OCI-LY7 (cell line): ENCODE measurements at regions of chr4 and their contacts with region 1.

Region 1: DNA sequence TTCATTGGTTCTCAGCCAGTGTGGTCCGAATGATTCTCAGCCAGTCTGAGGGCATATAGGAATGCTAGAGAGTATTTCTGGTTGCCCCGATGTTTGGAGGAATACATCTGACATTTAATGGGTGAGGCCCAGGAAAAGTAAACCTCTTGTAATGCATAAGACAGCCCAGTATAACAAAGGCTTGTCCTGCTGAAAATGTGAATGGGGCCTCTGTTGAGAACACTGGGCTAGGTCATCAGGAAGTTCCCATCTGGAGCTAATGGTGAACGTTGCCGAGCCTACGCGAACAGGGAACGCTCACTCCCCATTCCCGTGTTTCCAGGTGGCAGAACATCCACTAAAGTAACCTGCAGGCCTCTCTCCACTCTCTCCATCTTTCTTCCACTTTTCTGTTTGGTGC is 132.0 kb upstream of the CLNK start:
- DNase-seq: no peak
- H3K4me3 ChIP-seq: no peak overlapping the region
- H3K27ac ChIP-seq: no peak overlapping the region
- H3K4me1 ChIP-seq: no peaks in the 10 kb centered on the region
- CTCF ChIP-seq: no peak

Region 2: DNA sequence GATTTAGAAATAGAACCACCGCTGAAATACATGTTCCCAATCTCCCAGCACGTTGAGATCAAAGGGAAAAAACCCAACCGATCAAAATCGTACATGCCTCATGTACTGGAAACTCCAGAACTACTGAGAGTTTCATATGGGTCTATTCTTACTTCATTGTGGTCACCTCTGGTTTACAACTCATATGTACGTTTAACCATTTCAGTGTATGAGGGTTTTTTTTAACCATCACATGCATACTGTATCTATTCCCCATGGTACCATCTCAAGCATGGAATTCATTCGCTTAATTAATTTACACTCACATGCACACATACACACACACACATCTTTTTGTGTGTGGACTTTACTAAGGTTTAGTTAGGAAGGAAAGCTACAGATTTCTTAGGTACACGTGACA is 86.0 kb before region 1 on chr4:
- CTCF ChIA-PET with region 1: no interaction called
- POLR2A ChIA-PET with region 1: no interaction called
- intact Hi-C with region 1: no loop called
- DNase-seq: no peak
- H3K4me3 ChIP-seq: no peak overlapping the region
- H3K27ac ChIP-seq: no peak overlapping the region
- H3K4me1 ChIP-seq: peaks cover 31% of the 10 kb centered on the region
- CTCF ChIP-seq: no peak

Region 3: GRCh38 chr4:10783351-10783750 is 33.2 kb before region 1 on chr4:
- CTCF ChIA-PET with region 1: no interaction called
- POLR2A ChIA-PET with region 1: interaction called, 11 read pairs
- intact Hi-C with region 1: no loop called
- DNase-seq: no peak
- H3K4me3 ChIP-seq: no peak overlapping the region
- H3K27ac ChIP-seq: no peak overlapping the region
- H3K4me1 ChIP-seq: no peaks in the 10 kb centered on the region
- CTCF ChIP-seq: no peak